ENCODE measurements at regions of chr11 and their contacts with region 1.

Region 1: DNA sequence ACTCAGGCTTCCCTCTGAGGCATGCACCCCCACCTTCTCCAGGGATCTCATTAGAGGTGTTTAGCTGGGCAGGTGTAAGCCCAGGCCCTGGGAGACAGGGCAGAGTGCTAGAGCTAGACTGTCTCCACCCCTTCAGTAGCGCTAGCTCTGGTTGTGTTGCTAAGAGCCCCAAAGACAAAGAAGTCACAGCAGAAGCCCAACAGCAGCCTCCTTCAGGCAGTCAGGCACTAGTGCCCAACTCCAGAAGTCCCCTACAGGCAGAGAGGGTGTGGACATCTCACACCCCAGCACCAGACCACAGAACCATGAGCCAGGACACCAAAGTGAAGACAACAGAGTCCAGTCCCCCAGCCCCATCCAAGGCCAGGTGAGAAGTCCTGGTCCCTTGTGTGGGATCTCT is at the start of gene CNGA4:
- DNase-seq: no peak
- H3K4me3 Mint-ChIP-seq: no peak within 1 kb of the TSS
- H3K27ac Mint-ChIP-seq: no peak within 1 kb of the TSS
- H3K4me1 Mint-ChIP-seq: peaks cover 12% of the 10 kb centered on the region
- H3K27me3 Mint-ChIP-seq: peaks cover 14% of the 10 kb centered on the region

Region 2: DNA sequence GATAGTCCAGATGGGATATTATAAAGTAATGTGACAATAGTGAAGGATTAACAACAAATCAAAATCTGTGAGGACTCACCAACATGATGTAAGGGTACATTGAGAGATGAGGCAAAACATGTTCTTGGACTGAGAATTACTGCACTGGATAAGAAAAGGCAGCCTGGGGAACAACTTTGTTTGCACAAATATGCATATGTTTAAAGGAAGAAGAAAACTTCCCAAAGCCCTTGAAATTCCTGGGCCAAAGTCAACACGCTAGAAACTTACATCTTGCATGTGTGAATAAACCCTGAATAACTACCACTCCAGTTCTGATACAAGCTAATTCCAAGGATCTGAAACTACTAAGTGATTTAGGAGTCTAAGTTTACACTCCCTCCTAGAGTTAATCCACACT is 1101.9 kb before region 1 on chr11:
- CTCF ChIA-PET with region 1: no interaction called
- DNase-seq: no peak
- H3K4me3 Mint-ChIP-seq: no peak overlapping the region
- H3K27ac Mint-ChIP-seq: no peak overlapping the region
- H3K4me1 Mint-ChIP-seq: no peaks in the 10 kb centered on the region
- H3K27me3 Mint-ChIP-seq: no peaks in the 10 kb centered on the region

Region 3: GRCh38 chr11:6111673-6112072 is 127.2 kb before region 1 on chr11:
- CTCF ChIA-PET with region 1: no interaction called
- DNase-seq: no peak
- H3K4me3 Mint-ChIP-seq: no peak overlapping the region
- H3K27ac Mint-ChIP-seq: no peak overlapping the region
- H3K4me1 Mint-ChIP-seq: no peaks in the 10 kb centered on the region
- H3K27me3 Mint-ChIP-seq: peaks cover 8% of the 10 kb centered on the region

Region 4: GRCh38 chr11:6251120-6251733 is 12.3 kb after region 1 on chr11:
- CTCF ChIA-PET with region 1: interaction called, 22 read pairs
- DNase-seq: peak; percentile 67
- H3K4me3 Mint-ChIP-seq: no peak overlapping the region
- H3K27ac Mint-ChIP-seq: no peak overlapping the region
- H3K4me1 Mint-ChIP-seq: no peaks in the 10 kb centered on the region
- H3K27me3 Mint-ChIP-seq: peaks cover 23% of the 10 kb centered on the region

Region 5: DNA sequence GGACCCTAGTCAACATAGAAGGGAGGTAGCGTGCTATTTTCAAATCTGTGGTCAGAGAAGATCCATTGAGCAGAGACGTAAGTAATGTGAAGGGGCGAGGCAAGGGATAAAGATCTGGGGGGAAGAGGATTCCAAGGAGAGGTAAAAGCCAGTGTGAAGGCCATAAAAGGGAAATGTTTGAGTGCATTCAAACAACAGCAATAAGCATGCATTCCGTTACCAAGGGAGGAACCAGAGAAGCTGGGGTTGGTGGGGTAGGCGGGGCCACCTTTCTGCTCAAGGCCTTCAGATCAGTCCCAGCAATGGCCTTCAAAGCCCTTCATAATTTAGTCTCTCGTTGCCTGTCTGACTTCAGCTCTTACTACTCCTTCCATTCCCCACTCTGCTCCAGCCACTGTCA is 132.9 kb after region 1 on chr11:
- CTCF ChIA-PET with region 1: no interaction called
- DNase-seq: no peak
- H3K4me3 Mint-ChIP-seq: no peak overlapping the region
- H3K27ac Mint-ChIP-seq: no peak overlapping the region
- H3K4me1 Mint-ChIP-seq: peaks cover 11% of the 10 kb centered on the region
- H3K27me3 Mint-ChIP-seq: peaks cover 4% of the 10 kb centered on the region

Measured in activated naive CD4-positive, alpha-beta T cell treated with anti-CD3 and anti-CD28 coated beads, Interleukin-2, amount 10 ng/mL, durations not matched to agents 7 days and 5 days (primary cell).